PC-3 (cell line): ENCODE measurements at regions of chr15 and their contacts with region 1.

Region 1: GRCh38 chr15:41621200-41622193 is 38.7 kb upstream of the MGA start:
- DNase-seq: peak; percentile 54
- ATAC-seq: peak; percentile 70
- H3K4me3 ChIP-seq: peak overlapping the region; percentile 62
- H3K27ac ChIP-seq: no peak overlapping the region
- H3K4me1 ChIP-seq: peaks cover 14% of the 10 kb centered on the region; the same call in 1 of the 2 replicates
- H3K27me3 ChIP-seq: no peaks in the 10 kb centered on the region
- CTCF ChIP-seq: no peak

Region 2: GRCh38 chr15:41637086-41637485 is 15.6 kb after region 1 on chr15:
- CTCF ChIA-PET with region 1: interaction called, 11 read pairs
- POLR2A ChIA-PET with region 1: interaction called, 4 read pairs
- intact Hi-C with region 1: no loop called
- DNase-seq: no peak
- ATAC-seq: no peak
- H3K4me3 ChIP-seq: no peak overlapping the region
- H3K27ac ChIP-seq: no peak overlapping the region
- H3K4me1 ChIP-seq: no peaks in the 10 kb centered on the region
- H3K27me3 ChIP-seq: no peaks in the 10 kb centered on the region
- CTCF ChIP-seq: no peak

Region 3: GRCh38 chr15:41660235-41661077 is 39.0 kb after region 1 on chr15 and contains the start of gene MGA:
- CTCF ChIA-PET with region 1: no interaction called
- POLR2A ChIA-PET with region 1: no interaction called
- intact Hi-C with region 1: loop called (anchors 1 kb)
- DNase-seq: peak; percentile 94
- ATAC-seq: peak; percentile 78
- H3K4me3 ChIP-seq: peak within 1 kb of the TSS; percentile 68
- H3K27ac ChIP-seq: peak within 1 kb of the TSS; percentile 76
- H3K4me1 ChIP-seq: peaks cover 31% of the 10 kb centered on the region
- H3K27me3 ChIP-seq: no peaks in the 10 kb centered on the region
- CTCF ChIP-seq: peak; percentile 16; the same call in 1 of the 2 replicates
- total RNA-seq, gene MGA: 19.0 and 21.2 TPM in 2 replicates

Region 4: GRCh38 chr15:41827880-41828806 is 206.6 kb after region 1 on chr15 and contains the start of gene JMJD7:
- CTCF ChIA-PET with region 1: no interaction called
- POLR2A ChIA-PET with region 1: no interaction called
- intact Hi-C with region 1: no loop called
- DNase-seq: peak; percentile 88
- ATAC-seq: peak; percentile 85
- H3K4me3 ChIP-seq: peak within 1 kb of the TSS; percentile 87
- H3K27ac ChIP-seq: peak within 1 kb of the TSS; percentile 47
- H3K4me1 ChIP-seq: peaks cover 25% of the 10 kb centered on the region
- H3K27me3 ChIP-seq: no peaks in the 10 kb centered on the region
- CTCF ChIP-seq: no peak
- total RNA-seq, gene JMJD7: 8.1 and 13.7 TPM in 2 replicates